Right ventricle myocardium inferior (tissue), 1 donor: ENCODE measurements at regions of chr3 and their contacts with region 1.

Region 1: GRCh38 chr3:167762296-167762695 is 26.8 kb downstream of the SERPINI1 start:
- DNase-seq: no peak
- ATAC-seq: no peak

Region 2: GRCh38 chr3:167749728-167750127 is 12.6 kb before region 1 on chr3:
- intact Hi-C with region 1: loop called (anchors 1 kb)
- DNase-seq: no peak
- ATAC-seq: no peak

Region 3: GRCh38 chr3:168156479-168156878 is 394.2 kb after region 1 on chr3:
- intact Hi-C with region 1: no loop called
- DNase-seq: no peak
- ATAC-seq: peak; percentile 46

Region 4: GRCh38 chr3:168417016-168417415 is 654.7 kb after region 1 on chr3:
- intact Hi-C with region 1: no loop called
- DNase-seq: no peak
- ATAC-seq: peak; percentile 59